ENCODE measurements at regions of chr18 and their contacts with region 1.

Region 1: DNA sequence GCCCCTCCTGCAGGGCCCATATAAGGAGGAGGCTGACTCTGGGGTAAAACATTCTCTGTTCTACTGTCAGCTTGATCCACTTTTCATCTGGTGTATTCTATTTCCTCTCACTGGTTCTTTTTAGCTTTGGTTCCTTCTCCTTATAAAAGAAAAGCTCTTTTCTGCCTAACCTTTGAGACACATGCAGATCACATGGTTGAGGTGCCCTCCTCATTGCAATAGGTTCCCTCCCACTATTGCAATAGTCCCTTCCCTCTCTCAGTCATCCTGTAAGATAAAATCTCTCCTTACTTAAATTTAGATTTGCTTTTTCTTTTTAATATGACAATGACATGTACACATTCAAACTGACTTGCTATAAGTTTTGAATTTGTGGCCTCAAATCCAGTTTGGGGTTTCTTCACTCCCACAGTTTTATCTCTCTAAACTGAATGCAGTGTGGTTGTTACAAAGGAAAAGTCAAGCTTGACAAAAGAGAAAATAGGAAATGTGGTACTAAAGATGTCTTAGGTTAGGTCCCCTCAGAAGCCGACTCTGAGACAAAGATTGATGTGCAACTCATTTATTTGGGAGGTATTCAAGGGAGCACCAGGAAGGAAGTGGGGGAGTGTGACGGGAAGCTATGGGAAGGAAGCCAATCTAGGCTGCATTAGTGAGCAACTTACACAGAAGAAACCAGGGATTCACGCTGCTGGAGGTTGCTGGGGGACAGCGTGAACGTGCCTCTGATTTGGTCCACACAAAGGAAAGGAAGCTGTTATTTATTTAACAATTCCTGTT is 127.6 kb upstream of the LINC00305 start:
- DNase-seq: peak; percentile 98
- H3K4me3 ChIP-seq: no peak overlapping the region
- H3K27ac ChIP-seq: peak overlapping the region; percentile 95
- H3K4me1 ChIP-seq: peaks cover 22% of the 10 kb centered on the region
- H3K27me3 ChIP-seq: no peaks in the 10 kb centered on the region
- CTCF ChIP-seq: no peak

Region 2: GRCh38 chr18:65606551-65607130 is 1330.1 kb after region 1 on chr18:
- CTCF ChIA-PET with region 1: no interaction called
- POLR2A ChIA-PET with region 1: no interaction called
- intact Hi-C with region 1: loop called (anchors 2 kb)
- DNase-seq: peak; percentile 89
- H3K4me3 ChIP-seq: no peak overlapping the region
- H3K27ac ChIP-seq: peak overlapping the region; percentile 71
- H3K4me1 ChIP-seq: peaks cover 23% of the 10 kb centered on the region
- H3K27me3 ChIP-seq: no peaks in the 10 kb centered on the region
- CTCF ChIP-seq: no peak

Measured in A673 (cell line).